ENCODE measurements at regions of chr11 and their contacts with region 1.

Region 1: GRCh38 chr11:65859200-65859811 is 927 bp upstream of the MUS81 start:
- DNase-seq: peak; percentile 97
- ATAC-seq: peak; percentile 72
- H3K4me3 Mint-ChIP-seq: peak overlapping the region; percentile 91
- H3K27ac Mint-ChIP-seq: peak overlapping the region; percentile 98
- H3K4me1 Mint-ChIP-seq: peaks cover 37% of the 10 kb centered on the region
- H3K27me3 Mint-ChIP-seq: no peaks in the 10 kb centered on the region

Region 2: DNA sequence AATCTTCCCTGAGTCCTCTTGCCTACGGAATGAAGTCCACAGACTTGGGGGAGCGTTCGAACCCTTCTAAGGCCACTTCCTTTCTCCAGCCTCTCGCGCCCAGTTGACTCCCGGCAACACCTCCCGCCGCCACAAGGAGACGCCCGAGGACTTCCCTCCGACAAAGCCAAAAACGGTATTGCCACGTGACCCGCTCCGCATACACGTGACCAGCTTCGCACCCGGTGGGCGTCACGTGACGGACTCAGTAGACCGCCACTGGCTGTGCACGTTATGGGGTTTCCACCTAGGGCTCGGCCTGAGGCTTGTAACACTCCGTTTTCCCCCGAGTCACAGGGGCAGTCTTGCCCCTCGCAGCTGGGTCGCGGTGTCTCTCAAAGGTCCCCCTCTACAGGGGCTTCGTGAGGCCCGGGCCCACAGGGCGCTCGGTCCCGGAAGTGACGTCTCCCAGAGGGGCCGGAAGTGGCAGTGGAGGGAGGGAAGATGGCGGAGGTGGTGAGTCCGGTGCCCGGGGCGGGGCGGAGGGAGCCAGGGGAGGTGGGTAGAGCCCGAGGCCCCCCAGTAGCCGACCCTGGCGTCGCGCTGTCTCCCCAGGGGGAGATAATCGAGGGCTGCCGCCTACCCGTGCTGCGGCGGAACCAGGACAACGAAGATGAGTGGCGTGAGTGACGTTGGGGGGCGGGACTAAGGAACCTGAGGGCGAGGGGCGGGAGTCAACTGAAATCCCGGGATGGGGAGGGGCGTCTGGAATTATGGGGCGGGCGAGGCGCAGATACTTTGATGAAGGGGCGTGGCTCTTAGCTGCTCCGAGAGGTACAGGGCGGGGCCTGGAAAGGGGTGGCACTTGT is 147.3 kb before region 1 on chr11 and contains the start of gene KAT5:
- POLR2A ChIA-PET with region 1: interaction called, 30 read pairs
- DNase-seq: peak; percentile 98
- ATAC-seq: peak; percentile 83
- H3K4me3 Mint-ChIP-seq: peak within 1 kb of the TSS; percentile 95
- H3K27ac Mint-ChIP-seq: peak within 1 kb of the TSS; percentile 97
- H3K4me1 Mint-ChIP-seq: peaks cover 25% of the 10 kb centered on the region
- H3K27me3 Mint-ChIP-seq: no peaks in the 10 kb centered on the region
- total RNA-seq, gene KAT5: 75.6 to 82.6 TPM

Region 3: DNA sequence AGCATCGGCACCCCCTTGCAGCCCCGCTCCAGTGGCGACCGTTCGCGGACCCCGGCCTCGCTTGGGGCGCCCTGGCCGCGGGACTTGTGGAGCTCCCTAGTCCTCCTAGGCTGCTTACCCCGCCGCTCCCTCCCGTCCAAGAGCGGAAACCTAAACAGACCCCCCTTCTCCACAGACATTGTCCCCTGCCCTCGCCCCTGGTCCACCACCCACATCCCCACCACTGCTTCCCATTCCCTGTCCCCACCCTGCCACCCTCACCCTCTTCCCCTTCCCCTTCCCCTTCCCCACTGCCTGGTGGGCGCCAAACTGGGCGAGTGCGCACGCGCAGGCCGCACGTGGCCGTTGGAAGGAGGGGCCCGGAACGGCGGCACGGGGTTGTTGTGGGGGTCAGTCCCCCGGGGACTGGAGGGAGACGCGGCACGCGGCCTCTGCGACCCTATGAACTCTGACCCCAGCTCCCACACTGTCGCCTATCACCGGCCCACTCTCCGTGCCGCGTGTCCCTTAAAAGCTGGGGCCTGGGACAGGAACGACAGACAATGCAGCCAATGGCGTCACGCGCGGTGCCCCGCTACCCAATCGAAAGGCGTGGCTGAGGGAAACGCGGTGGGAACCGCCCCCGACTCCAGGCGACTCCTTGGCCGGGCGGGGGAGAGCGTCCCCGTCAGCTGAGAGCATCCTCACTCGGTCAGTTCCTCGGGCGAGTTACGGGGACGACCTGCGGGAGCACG is 25.8 kb before region 1 on chr11 and contains the start of gene SNX32:
- POLR2A ChIA-PET with region 1: interaction called, 16 read pairs
- DNase-seq: peak; percentile 96
- ATAC-seq: peak; percentile 99
- H3K4me3 Mint-ChIP-seq: no peak within 1 kb of the TSS
- H3K27ac Mint-ChIP-seq: no peak within 1 kb of the TSS
- H3K4me1 Mint-ChIP-seq: peaks cover 9% of the 10 kb centered on the region
- H3K27me3 Mint-ChIP-seq: peaks cover 22% of the 10 kb centered on the region
- total RNA-seq, gene SNX32: 2.6 to 3.6 TPM

Region 4: DNA sequence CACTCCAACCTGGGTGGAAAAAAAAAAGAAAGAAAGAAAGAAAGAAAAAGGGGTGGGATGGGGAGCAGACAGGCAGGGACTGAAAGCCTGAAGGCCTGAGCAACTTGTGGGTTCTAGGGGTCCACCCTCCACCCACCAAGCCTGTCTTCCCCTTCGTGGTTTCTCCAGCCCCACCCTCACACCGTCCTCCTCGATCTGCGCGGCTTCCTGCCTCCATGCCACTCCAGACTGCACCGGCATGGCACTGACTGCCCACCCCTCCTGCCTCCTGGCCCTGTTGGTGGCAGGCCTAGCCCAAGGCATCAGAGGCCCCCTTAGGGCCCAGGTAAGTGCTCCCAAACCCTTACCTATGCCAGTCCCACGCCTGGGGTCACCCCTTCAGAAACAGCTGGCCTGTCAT is 20.3 kb after region 1 on chr11 and contains the start of gene CTSW:
- POLR2A ChIA-PET with region 1: interaction called, 304 read pairs
- DNase-seq: peak; percentile 66
- ATAC-seq: peak; percentile 60
- H3K4me3 Mint-ChIP-seq: peak within 1 kb of the TSS; percentile 87
- H3K27ac Mint-ChIP-seq: peak within 1 kb of the TSS; percentile 92
- H3K4me1 Mint-ChIP-seq: peaks cover 54% of the 10 kb centered on the region
- H3K27me3 Mint-ChIP-seq: no peaks in the 10 kb centered on the region
- total RNA-seq, gene CTSW: 161 to 175 TPM